ENCODE measurements at regions of chr17 and their contacts with region 1.

Region 1: GRCh38 chr17:4833941-4834680 is 971 bp downstream of the MINK1 start:
- DNase-seq: peak; percentile 55
- H3K4me3 ChIP-seq: peak overlapping the region; percentile 67 to 79 (median 77)
- H3K27ac ChIP-seq: no peak overlapping the region
- H3K4me1 ChIP-seq: peaks cover 12% of the 10 kb centered on the region
- H3K27me3 ChIP-seq: no peaks in the 10 kb centered on the region
- CTCF ChIP-seq: no peak
- POLR2A ChIP-seq: no peak

Region 2: GRCh38 chr17:4616476-4616875 is 217.6 kb before region 1 on chr17:
- CTCF ChIA-PET with region 1: no interaction called
- POLR2A ChIA-PET with region 1: no interaction called
- dilution Hi-C with region 1: no loop called
- intact Hi-C with region 1: no loop called
- DNase-seq: no peak
- H3K4me3 ChIP-seq: no peak overlapping the region
- H3K27ac ChIP-seq: no peak overlapping the region
- H3K4me1 ChIP-seq: no peaks in the 10 kb centered on the region
- H3K27me3 ChIP-seq: peaks cover 0 to 9% of the 10 kb centered on the region in 2 experiments
- CTCF ChIP-seq: no peak
- POLR2A ChIP-seq: no peak

Region 3: DNA sequence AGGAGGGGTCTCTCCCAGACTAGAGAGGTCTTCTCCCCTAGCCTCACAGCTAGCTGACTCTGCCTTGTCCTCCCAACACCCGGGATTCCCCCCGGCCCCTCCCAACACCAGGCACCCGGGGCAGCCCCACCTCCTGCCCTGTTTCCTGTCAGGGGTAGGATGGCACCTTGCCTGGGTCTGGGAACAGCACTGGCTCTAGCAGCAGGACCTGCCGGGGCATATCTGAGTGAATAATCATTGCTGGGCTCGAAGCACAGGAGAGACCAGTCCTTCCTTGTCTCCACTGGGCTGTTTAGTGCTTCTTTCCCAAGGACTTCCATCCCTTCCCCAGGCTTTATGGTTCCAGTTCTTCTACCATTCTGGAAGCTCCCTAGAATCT is 24.8 kb after region 1 on chr17:
- CTCF ChIA-PET with region 1: interaction called, 8 read pairs
- POLR2A ChIA-PET with region 1: no interaction called
- dilution Hi-C with region 1: no loop called
- intact Hi-C with region 1: loop called (anchors 1 kb)
- DNase-seq: peak; percentile 69
- H3K4me3 ChIP-seq: peak overlapping the region in 1 of 3 experiments; percentile 48
- H3K27ac ChIP-seq: peak overlapping the region; percentile 79
- H3K4me1 ChIP-seq: peaks cover 47% of the 10 kb centered on the region
- H3K27me3 ChIP-seq: no peaks in the 10 kb centered on the region
- CTCF ChIP-seq: no peak
- POLR2A ChIP-seq: peak; percentile 40

Region 4: GRCh38 chr17:4881761-4882555 is 47.8 kb after region 1 on chr17:
- CTCF ChIA-PET with region 1: interaction called, 6 read pairs
- POLR2A ChIA-PET with region 1: no interaction called
- dilution Hi-C with region 1: no loop called
- intact Hi-C with region 1: loop called (anchors 1 kb)
- DNase-seq: peak; percentile 52
- H3K4me3 ChIP-seq: no peak overlapping the region
- H3K27ac ChIP-seq: no peak overlapping the region
- H3K4me1 ChIP-seq: no peaks in the 10 kb centered on the region
- H3K27me3 ChIP-seq: no peaks in the 10 kb centered on the region
- CTCF ChIP-seq: peak; percentile 71 to 89
- POLR2A ChIP-seq: no peak

Measured in endothelial cell of umbilical vein (primary cell).